Thyroid gland (tissue), 4 donors: ENCODE measurements at regions of chr7 and their contacts with region 1.

Region 1: GRCh38 chr7:95549818-95550529 is 46.3 kb downstream of the PDK4 start:
- DNase-seq: peak; percentile 95 to 96
- H3K4me3 ChIP-seq: no peak overlapping the region
- H3K27ac ChIP-seq: peak overlapping the region; percentile 98
- H3K4me1 ChIP-seq: peaks cover 54 to 62% of the 10 kb centered on the region in 2 donors
- H3K27me3 ChIP-seq: no peaks in the 10 kb centered on the region
- CTCF ChIP-seq: no peak
- POLR2A ChIP-seq: peak; percentile 10 to 91

Region 2: GRCh38 chr7:94374231-94374630 is 1175.7 kb before region 1 on chr7:
- intact Hi-C with region 1: no loop called
- DNase-seq: peak; percentile 83 to 86
- H3K4me3 ChIP-seq: no peak overlapping the region
- H3K27ac ChIP-seq: peak overlapping the region; percentile 13 to 46 (median 44)
- H3K4me1 ChIP-seq: peaks cover 6% of the 10 kb centered on the region in 2 donors
- H3K27me3 ChIP-seq: no peaks in the 10 kb centered on the region
- CTCF ChIP-seq: no peak
- POLR2A ChIP-seq: peak in 1 of 2 donors; percentile 35

Region 3: DNA sequence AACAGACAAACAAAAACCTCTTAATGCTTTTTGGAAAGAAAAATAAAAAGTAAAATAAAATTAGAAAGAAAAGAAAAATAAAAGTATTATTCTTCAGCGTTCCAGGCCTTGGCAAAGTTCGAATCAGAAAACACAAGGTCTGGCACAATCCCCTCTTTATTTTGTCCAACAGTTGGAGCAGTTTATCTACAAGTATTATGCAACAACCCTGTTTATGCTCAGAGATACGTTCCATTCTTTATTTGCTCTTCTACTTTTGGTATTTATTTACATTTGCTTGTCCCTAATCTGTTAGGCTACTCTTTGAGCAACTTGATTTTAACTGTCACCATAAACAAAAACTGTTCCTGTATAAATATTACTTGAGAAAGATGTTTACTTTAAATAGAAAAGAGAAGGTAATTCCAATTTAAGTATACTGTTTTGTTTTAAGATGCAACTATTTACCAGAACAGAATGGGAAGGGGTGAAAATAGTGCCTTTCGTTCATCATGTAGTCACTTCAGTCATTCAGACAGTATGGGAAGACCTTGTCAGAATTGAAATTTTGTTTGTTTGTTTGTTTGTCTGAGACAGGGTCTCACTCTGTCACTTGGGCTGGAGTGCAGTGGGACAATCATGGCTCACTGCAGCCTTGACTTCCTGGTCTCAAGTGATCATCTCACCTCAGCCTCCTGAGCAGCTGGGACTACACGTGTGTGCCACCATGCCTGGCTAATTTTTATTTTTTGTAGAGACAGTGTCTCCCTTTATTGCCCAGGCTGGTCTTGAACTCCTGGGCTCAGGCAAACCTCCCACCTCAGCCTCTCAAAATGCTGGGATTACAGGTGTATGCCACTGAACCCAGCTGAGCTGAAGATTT is 40.6 kb after region 1 on chr7:
- intact Hi-C with region 1: loop called (anchors 5 kb)
- DNase-seq: no peak
- H3K4me3 ChIP-seq: peak overlapping the region in 1 of 3 donors; percentile 93
- H3K27ac ChIP-seq: peak overlapping the region; percentile 14 to 100 (median 99)
- H3K4me1 ChIP-seq: peaks cover 47 to 52% of the 10 kb centered on the region in 2 donors
- H3K27me3 ChIP-seq: no peaks in the 10 kb centered on the region
- CTCF ChIP-seq: no peak
- POLR2A ChIP-seq: no peak

Region 4: DNA sequence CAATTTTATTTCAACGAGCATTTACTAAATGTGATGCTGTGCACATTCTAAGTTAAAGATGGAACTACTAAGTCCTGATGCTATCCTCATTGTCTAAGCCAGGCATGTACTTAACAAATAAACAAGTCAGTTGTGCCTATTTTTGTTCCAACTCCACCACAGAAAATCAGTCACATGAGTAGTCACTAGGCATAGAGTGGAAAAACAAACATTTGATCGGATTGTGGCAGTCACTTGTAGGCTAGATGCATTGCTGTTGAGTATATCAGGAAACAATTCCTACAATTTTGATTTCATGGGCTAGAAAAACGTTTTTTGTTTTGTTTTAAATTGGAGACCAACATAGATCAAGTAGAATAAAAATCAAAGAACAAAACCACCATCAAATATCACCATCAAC is 949.6 kb after region 1 on chr7:
- intact Hi-C with region 1: no loop called
- DNase-seq: no peak
- H3K4me3 ChIP-seq: no peak overlapping the region
- H3K27ac ChIP-seq: no peak overlapping the region
- H3K4me1 ChIP-seq: no peaks in the 10 kb centered on the region
- H3K27me3 ChIP-seq: no peaks in the 10 kb centered on the region
- CTCF ChIP-seq: no peak
- POLR2A ChIP-seq: no peak